ENCODE measurements at regions of chr16 and their contacts with region 1.

Region 1: DNA sequence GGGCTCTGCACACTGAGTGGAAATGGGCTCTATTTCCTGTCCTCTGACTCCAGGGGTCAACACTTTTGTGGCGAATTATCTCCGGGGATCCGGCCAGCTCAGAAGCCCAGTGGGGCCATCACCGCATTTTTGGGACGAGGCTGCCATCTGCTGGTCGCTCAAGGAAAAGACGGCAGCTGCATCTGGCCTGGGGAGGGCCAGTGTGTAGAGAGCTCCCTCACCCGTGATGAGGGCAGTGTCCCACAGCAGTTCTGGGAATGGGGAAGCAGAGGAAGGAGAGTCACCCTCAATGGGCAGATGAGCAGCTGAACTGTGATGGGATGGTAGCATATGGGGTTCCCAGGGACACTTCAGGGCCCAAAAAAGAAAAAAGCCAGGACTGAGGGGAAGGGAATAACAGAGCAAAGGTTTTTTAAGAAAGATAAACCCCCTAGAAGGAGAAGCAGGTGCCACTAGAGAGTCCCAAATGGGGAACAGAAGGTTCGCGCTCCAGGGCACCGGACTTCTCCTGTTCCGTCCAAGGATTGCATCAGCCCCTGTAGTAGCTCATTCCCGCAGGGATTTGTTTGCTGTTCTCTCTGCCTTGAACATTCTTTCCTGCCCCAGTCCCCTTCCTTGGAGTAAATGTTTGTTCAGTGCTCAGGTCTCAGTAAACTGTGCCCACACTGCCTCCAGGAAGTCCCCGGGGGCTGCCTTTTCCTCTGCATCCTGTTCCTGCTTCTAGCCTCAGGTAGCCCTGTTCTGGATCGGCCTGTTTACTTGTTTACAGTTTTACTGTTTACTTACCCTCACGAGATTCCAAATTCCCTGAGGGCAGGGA is 9.3 kb upstream of the ABCC12 start:
- DNase-seq: peak; percentile 64 to 84
- H3K4me3 ChIP-seq: no peak overlapping the region
- H3K27ac ChIP-seq: no peak overlapping the region
- H3K4me1 ChIP-seq: peaks cover 0 to 4% (median 2%) of the 10 kb centered on the region in 4 donors
- H3K27me3 ChIP-seq: peaks cover 0 to 2% of the 10 kb centered on the region in 2 donors
- CTCF ChIP-seq: peak; percentile 76 to 79

Region 2: GRCh38 chr16:47037746-47038458 is 1127.2 kb before region 1 on chr16:
- intact Hi-C with region 1: loop called (anchors 5 kb)
- DNase-seq: peak; percentile 87 to 89
- H3K4me3 ChIP-seq: peak overlapping the region; percentile 55 to 64
- H3K27ac ChIP-seq: peak overlapping the region; percentile 28 to 50
- H3K4me1 ChIP-seq: peaks cover 0 to 9% (median 5%) of the 10 kb centered on the region in 4 donors
- H3K27me3 ChIP-seq: no peaks in the 10 kb centered on the region
- CTCF ChIP-seq: peak; percentile 87 to 92

Region 3: DNA sequence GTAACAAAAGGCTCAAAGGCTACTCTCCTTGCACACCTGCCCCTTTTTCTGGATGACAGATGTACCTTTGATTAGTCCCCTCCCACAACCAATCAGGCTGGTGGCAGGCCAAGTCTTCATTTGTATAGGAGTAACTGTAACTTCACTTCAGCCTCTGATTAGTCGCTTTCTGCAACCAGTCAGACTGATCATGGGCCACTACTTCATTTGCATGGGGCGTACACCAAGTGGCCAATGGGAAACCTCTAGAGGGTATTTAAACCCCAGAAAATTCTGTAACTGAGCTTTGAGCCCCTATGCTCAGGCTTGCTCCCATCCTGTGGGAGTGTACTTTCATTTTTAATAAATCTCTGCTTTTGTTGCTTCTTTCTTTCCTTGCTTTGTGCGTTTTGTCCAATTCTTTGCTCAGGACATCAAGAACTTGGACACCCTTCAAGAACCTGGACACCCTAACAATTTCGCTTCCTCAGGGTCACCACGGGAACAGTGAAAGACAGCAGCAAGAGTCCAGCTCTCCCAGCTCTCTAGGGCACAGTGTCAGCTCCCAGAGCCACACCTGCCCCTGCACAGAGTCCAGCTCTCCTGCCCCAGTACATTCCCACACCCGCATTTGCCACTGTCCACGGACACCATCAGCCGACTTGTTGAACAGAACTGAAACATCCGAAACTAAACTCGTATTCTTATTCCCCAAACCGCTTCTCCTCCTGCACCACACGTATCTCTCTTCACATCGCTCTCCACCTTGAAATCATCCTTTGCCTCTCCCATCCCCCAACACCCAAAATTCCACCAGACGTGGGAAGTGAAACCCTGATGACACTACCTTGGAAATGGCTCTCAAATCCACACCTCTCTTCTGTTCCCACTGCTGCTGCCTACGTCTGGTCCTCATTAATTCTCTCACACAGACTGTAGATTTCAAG is 62.8 kb before region 1 on chr16:
- intact Hi-C with region 1: no loop called
- DNase-seq: no peak
- H3K4me3 ChIP-seq: no peak overlapping the region
- H3K27ac ChIP-seq: no peak overlapping the region
- H3K4me1 ChIP-seq: no peaks in the 10 kb centered on the region
- H3K27me3 ChIP-seq: peaks cover 0 to 11% of the 10 kb centered on the region in 2 donors
- CTCF ChIP-seq: no peak

Region 4: DNA sequence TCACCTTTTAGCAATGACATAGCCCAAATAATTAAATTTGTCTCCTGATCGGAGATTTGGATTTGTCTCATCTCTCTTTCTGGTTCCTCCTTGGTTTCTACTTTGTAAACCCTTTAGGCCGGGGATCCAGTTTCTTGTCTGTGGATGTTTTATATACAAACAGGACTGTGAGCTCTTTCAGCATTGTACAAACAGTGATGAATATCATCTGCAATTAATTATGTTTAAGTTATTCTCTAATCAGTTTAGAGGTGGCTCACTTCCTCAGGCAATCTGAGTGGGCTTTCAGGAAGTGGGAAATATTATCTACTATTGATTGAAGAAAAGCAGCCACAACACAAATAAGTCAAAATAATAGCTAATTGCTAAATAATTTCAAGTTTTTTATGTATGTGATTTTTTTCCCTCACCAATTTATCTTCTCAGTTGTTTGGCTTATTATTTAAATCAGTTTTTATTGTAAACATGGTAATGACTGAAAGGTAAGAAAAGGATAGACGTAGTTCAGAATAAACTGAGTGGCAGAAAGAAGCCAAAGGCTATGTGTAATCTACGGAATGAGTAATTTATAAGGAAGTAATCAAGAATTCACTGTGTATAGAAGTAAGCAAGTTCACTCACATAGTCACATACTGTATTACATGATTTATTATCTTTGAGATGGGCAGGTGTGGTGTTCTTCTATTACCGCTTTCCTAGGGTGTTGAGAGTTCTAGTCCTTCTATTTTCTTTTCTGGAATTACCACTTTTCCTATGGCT is 85.6 kb after region 1 on chr16:
- intact Hi-C with region 1: no loop called
- DNase-seq: no peak
- H3K4me3 ChIP-seq: no peak overlapping the region
- H3K27ac ChIP-seq: no peak overlapping the region
- H3K4me1 ChIP-seq: peaks cover 0 to 26% (median 17%) of the 10 kb centered on the region in 4 donors
- H3K27me3 ChIP-seq: no peaks in the 10 kb centered on the region
- CTCF ChIP-seq: no peak

Measured in tibial artery (tissue), 4 donors.